Astrocyte of the cerebellum (primary cell): ENCODE measurements at regions of chr12 and their contacts with region 1.

Region 1: DNA sequence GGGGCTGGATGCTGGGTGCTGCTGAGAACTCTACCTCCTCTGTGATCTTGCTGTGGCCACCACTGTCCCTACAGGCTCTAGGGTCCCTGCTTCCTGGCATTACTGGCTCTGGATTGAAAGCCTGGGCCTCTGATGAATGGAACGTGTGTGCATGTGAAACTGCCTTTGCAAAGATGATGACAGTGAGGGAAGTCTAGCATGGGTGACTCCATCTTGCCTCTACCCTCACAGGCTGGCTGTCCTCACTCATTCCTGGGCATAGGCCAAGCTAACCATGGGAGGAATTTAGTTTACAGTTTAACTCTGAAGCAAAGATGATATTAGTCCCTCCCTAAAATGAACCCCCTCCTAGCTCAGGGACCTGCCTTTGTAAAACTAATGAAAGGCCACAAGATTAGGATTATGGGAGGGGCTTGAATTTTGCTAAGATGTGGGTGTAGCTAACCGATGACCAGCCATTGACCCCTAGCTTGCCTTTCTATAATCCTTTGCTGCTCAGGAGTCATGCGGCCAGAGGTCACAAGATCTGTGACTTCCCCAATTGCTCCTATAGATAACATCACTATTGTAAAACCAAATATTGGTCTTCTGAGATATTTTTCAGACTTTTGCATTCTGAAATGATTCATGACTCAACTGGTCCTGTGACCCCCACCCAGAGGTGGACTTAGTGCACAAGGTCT is 2.2 kb upstream of the C1S start:
- DNase-seq: no peak
- H3K4me3 ChIP-seq: no peak overlapping the region
- CTCF ChIP-seq: no peak

Region 2: DNA sequence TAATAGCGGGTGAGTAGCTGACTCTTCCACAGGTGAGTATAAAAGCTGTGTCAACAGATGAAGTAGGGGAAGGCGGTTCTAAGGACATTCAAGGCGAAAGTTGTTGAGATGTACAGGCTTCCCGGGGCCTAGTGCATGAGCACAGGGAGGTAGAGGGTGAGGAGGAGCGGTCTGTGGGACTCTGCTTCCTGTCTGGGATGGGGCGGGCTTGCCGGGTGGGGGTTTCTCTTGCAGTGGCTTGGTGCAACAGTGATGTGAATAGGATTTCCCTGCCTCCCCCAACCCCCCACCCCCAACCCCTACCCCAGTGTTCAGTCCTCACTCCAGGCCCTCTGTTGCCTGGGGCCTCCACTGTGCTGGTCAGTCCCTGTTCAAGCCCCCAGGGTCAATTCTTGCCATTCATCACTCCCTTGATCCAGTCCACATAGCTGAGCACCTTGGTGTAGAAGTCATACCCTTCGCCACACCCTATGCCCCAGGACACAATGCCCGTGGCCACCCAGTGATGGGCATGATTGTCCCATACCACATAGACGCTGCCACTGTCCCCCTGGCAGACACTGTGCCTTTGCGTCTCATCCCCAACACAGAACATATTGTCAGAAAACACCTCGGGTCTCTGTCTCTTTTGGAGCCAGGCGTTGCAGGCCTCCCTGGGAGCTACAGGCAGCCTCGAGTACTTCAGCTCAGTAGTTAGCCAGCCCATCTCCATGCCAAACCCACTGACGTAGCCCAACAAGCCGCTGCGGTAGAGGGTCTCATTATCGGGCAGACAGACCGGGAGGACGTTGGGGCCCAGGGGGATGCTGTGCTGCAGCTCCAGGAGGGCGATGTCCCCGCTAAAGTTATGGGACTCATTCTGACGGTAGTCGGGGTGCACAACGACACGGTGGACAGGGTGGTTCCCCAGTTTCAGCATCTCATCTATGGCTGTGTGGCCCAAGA is 38.0 kb after region 1 on chr12:
- in situ Hi-C with region 1: no loop called
- DNase-seq: no peak
- H3K4me3 ChIP-seq: no peak overlapping the region
- CTCF ChIP-seq: no peak

Region 3: DNA sequence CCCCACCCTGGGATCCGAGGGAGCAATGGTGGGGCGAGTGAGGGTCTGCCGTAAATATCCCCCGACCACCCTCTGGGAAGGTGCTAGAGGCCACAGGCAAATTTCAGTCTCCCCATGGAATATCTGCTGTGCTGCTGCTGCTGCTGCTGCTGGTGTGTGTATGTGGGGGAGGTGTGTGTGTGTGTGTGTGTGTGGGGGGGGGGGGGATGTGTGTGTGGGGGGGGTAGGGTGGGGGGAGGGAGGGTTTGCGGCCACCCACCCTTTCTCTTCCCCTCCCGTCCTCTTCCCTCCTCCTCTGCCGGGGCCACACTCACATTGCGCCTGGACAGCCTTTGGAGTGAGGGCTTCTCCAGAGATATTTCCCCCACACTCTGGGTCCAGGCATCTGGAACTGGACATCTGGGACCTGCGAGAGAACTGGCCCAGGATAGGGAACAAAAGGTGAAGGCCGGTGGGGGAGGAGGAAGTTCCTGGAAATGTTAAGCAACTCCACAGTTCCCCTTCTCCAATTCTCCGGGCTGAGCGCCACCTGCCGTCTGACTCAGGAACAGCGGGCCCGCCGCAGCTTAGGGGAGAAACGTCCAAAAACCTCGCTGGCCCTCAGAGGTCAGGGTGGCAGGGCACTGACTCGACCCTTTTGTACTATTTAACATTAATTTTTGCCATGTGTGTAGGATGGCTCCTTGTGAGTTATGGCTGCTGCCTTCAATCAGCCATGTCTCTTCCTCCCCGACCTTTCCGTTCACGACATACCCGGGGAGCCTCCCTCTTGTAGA is 50.7 kb after region 1 on chr12 and contains the start of gene C1RL:
- in situ Hi-C with region 1: loop called (anchors 5 kb)
- DNase-seq: peak; percentile 57
- H3K4me3 ChIP-seq: peak within 1 kb of the TSS; percentile 61
- CTCF ChIP-seq: peak; percentile 99